Naive thymus-derived CD4-positive, alpha-beta T cell (primary cell): ENCODE measurements at regions of chr10 and their contacts with region 1.

Region 1: DNA sequence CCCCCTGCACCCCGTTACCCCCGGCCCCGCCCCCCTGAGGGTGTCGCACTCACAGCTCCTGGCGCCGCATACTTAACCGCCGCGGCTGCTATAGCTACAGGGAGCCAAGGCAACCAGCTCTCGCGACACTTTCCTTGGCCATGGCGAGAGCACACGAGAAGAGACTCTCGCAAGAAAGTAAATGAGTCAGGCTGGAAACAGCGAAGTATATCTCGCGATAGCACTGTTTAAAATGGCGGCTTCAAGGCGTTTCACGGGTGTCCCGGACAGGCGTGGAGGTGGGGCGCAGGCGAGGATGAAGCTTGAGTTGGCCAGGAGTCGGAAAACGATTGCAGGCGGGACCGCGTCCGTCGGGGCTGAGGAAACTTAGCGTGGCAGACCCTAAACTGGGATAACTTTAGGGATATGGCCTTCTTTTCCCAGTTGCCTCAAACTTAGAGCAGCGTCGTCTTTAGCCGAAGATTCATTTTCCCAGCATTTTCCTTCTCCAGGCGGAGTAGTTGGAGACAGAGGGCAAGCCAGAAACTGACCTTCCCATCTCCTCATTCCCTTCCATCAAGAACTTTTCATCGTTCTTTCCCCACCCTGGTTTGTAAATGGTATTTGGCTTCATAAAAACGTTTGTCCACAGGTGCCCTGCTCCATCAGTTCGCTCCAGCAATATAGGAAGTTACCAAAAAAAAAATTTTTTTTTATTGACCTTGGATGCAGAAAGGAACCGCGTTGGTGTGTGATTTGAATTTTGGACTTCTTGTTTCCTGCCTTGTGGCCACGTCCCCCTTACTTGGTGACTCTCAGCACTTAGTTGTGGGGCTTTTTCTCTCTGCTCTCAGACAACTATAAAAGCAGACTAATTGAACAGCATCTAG is 15.2 kb downstream of the MYOZ1 start:
- DNase-seq: peak; percentile 76 to 97 (median 91)
- ATAC-seq: peak; percentile 97
- H3K4me3 ChIP-seq: peak overlapping the region; percentile 99
- H3K4me3 Mint-ChIP-seq: peak overlapping the region; percentile 91 to 100 (median 96)
- H3K27ac ChIP-seq: peak overlapping the region; percentile 87
- H3K27ac Mint-ChIP-seq: peak overlapping the region; percentile 95 to 100 (median 97)
- H3K4me1 ChIP-seq: peaks cover 7 to 9% of the 10 kb centered on the region in 2 donors
- H3K4me1 Mint-ChIP-seq: peaks cover 0 to 29% (median 24%) of the 10 kb centered on the region in 7 donors
- H3K27me3 ChIP-seq: no peaks in the 10 kb centered on the region
- H3K27me3 Mint-ChIP-seq: no peaks in the 10 kb centered on the region

Region 2: GRCh38 chr10:72625608-72626443 is 1000.3 kb before region 1 on chr10 and contains the start of gene MICU1:
- CTCF ChIA-PET with region 1: no interaction called
- POLR2A ChIA-PET with region 1: no interaction called
- intact Hi-C with region 1: loop called in 1 of 2 experiments (anchors 5 kb)
- DNase-seq: peak; percentile 74 to 93 (median 90)
- ATAC-seq: peak; percentile 100
- H3K4me3 ChIP-seq: peak within 1 kb of the TSS; percentile 97
- H3K4me3 Mint-ChIP-seq: peak within 1 kb of the TSS; percentile 97 to 100 (median 100)
- H3K27ac ChIP-seq: peak within 1 kb of the TSS; percentile 76
- H3K27ac Mint-ChIP-seq: peak within 1 kb of the TSS; percentile 83 to 99 (median 97)
- H3K4me1 ChIP-seq: peaks cover 11 to 16% of the 10 kb centered on the region in 2 donors
- H3K4me1 Mint-ChIP-seq: peaks cover 11 to 28% (median 16%) of the 10 kb centered on the region in 7 donors
- H3K27me3 ChIP-seq: no peaks in the 10 kb centered on the region
- H3K27me3 Mint-ChIP-seq: peaks cover 0 to 8% (median 0%) of the 10 kb centered on the region in 5 donors
- total RNA-seq, gene MICU1: 20.8 to 39.6 (median 26.3) TPM

Region 3: GRCh38 chr10:73246783-73247508 is 379.2 kb before region 1 on chr10 and contains the start of gene DNAJC9:
- CTCF ChIA-PET with region 1: no interaction called
- POLR2A ChIA-PET with region 1: no interaction called
- intact Hi-C with region 1: loop called (anchors 1 to 2 kb)
- DNase-seq: peak; percentile 93 to 98 (median 96)
- ATAC-seq: peak; percentile 95
- H3K4me3 ChIP-seq: peak within 1 kb of the TSS; percentile 71
- H3K4me3 Mint-ChIP-seq: peak within 1 kb of the TSS; percentile 92 to 100 (median 97)
- H3K27ac ChIP-seq: peak within 1 kb of the TSS; percentile 86
- H3K27ac Mint-ChIP-seq: peak within 1 kb of the TSS; percentile 91 to 98 (median 96)
- H3K4me1 ChIP-seq: peaks cover 27 to 37% of the 10 kb centered on the region in 2 donors
- H3K4me1 Mint-ChIP-seq: peaks cover 30 to 69% (median 55%) of the 10 kb centered on the region in 7 donors
- H3K27me3 ChIP-seq: no peaks in the 10 kb centered on the region
- H3K27me3 Mint-ChIP-seq: no peaks in the 10 kb centered on the region
- total RNA-seq, gene DNAJC9: 14.5 to 47.7 (median 26.8) TPM

Region 4: DNA sequence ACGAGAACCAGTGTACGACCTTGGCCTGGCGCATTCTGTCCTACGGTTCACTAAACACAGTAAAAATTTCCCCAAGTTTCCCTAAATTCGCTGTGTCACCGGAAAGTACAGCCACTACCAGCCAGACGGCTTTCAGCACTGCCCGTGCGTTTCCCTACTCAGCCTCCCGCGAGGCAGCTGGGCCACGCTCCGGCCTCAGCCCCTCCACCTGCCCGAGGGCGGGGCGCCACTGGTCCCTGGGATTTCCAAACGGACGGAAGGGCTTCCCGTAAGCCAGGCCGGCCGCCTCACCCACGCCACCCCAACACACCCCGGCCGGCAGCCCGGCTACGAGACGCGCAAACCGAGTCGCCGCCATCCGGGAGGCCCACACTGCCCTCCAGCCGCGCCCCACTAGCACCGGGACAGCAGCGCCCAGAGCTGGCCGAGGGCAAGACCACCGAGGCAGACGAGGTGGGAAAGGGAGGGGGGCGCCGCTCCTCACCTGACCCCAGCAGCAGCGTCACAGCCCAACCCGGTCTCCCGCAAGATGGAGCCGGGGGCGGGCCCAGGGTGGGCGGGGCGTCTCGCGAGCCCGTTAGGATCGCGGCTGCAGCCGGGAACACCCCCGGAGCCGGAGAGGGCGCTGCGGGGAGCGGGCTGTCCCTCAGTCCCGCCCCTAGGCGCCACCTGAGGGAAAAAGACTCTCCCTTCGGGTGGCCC is 212.4 kb before region 1 on chr10 and contains the start of gene ANXA7:
- CTCF ChIA-PET with region 1: no interaction called
- POLR2A ChIA-PET with region 1: interaction called, 3 read pairs
- intact Hi-C with region 1: loop called (anchors 1 kb)
- DNase-seq: peak; percentile 78 to 93 (median 85)
- ATAC-seq: peak; percentile 99
- H3K4me3 ChIP-seq: peak within 1 kb of the TSS; percentile 78
- H3K4me3 Mint-ChIP-seq: peak within 1 kb of the TSS; percentile 82 to 97 (median 94)
- H3K27ac ChIP-seq: peak within 1 kb of the TSS; percentile 98
- H3K27ac Mint-ChIP-seq: peak within 1 kb of the TSS; percentile 83 to 95 (median 90)
- H3K4me1 ChIP-seq: peaks cover 8 to 16% of the 10 kb centered on the region in 2 donors
- H3K4me1 Mint-ChIP-seq: peaks cover 39 to 60% (median 53%) of the 10 kb centered on the region in 7 donors
- H3K27me3 ChIP-seq: no peaks in the 10 kb centered on the region
- H3K27me3 Mint-ChIP-seq: peaks cover 0 to 4% (median 0%) of the 10 kb centered on the region in 5 donors
- total RNA-seq, gene ANXA7: 74.8 to 118 (median 97.3) TPM

Region 5: DNA sequence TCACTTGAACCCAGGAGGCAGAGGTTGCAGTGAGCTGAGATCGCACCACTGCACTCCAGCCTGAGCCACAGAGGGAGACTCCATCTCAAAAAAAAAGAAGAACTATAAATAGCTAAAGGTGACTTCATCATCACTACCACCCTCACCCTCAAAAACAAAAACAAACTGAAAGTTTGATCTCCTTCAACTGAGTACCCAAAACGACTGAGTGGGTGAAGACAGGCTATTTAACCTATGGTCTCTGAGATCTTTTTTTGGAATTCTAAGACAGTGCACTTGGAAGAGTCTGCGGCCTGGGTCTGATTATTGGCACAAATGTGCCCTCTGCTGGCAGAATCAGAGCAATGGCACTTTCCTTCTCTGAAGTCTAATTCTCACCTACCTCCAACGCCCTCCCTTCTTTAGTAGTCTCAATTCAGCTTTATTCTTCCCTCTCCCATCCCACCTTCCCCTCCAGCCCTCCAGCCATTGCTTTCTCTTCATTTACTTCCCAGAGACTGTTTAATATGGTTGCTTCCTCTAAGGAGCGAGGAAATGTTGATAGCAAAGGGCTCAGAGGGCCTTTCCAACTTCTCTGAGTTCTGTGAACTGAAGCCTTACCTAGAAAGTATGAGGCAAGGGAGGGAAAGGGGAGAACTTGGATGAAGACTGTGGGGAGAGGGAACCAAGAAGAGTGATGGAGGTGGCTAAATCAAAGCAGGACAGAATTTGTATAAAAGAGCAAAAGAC is 18.1 kb after region 1 on chr10:
- CTCF ChIA-PET with region 1: interaction called, 5 read pairs
- POLR2A ChIA-PET with region 1: interaction called, 4 read pairs
- intact Hi-C with region 1: loop called (anchors 1 kb)
- DNase-seq: peak in 8 of 9 donors; percentile 33 to 70 (median 60)
- ATAC-seq: peak; percentile 82
- H3K4me3 ChIP-seq: no peak overlapping the region
- H3K4me3 Mint-ChIP-seq: peak overlapping the region in 2 of 10 donors; percentile 34 to 35
- H3K27ac ChIP-seq: no peak overlapping the region
- H3K27ac Mint-ChIP-seq: peak overlapping the region in 5 of 9 donors; percentile 12 to 62 (median 50)
- H3K4me1 ChIP-seq: no peaks in the 10 kb centered on the region
- H3K4me1 Mint-ChIP-seq: peaks cover 0 to 17% (median 6%) of the 10 kb centered on the region in 7 donors
- H3K27me3 ChIP-seq: no peaks in the 10 kb centered on the region
- H3K27me3 Mint-ChIP-seq: peaks cover 0 to 14% (median 11%) of the 10 kb centered on the region in 5 donors

Region 6: GRCh38 chr10:73785221-73785720 is 159.2 kb after region 1 on chr10 and contains the start of gene ZSWIM8:
- CTCF ChIA-PET with region 1: no interaction called
- POLR2A ChIA-PET with region 1: no interaction called
- intact Hi-C with region 1: loop called in 1 of 2 experiments (anchors 5 kb)
- DNase-seq: peak; percentile 70 to 93 (median 86)
- ATAC-seq: peak; percentile 91
- H3K4me3 ChIP-seq: peak within 1 kb of the TSS; percentile 91
- H3K4me3 Mint-ChIP-seq: peak within 1 kb of the TSS; percentile 97 to 100 (median 98)
- H3K27ac ChIP-seq: peak within 1 kb of the TSS; percentile 83
- H3K27ac Mint-ChIP-seq: peak within 1 kb of the TSS; percentile 95 to 99 (median 98)
- H3K4me1 ChIP-seq: peaks cover 36 to 43% of the 10 kb centered on the region in 2 donors
- H3K4me1 Mint-ChIP-seq: peaks cover 27 to 66% (median 53%) of the 10 kb centered on the region in 7 donors
- H3K27me3 ChIP-seq: no peaks in the 10 kb centered on the region
- H3K27me3 Mint-ChIP-seq: no peaks in the 10 kb centered on the region
- total RNA-seq, gene ZSWIM8: 70.9 to 102 (median 83.2) TPM

Region 7: GRCh38 chr10:73803680-73804286 is 177.7 kb after region 1 on chr10:
- CTCF ChIA-PET with region 1: no interaction called
- POLR2A ChIA-PET with region 1: no interaction called
- intact Hi-C with region 1: no loop called
- DNase-seq: no peak
- ATAC-seq: no peak
- H3K4me3 ChIP-seq: no peak overlapping the region
- H3K4me3 Mint-ChIP-seq: peak overlapping the region in 1 of 10 donors; percentile 24
- H3K27ac ChIP-seq: no peak overlapping the region
- H3K27ac Mint-ChIP-seq: peak overlapping the region; percentile 7 to 84 (median 49)
- H3K4me1 ChIP-seq: peaks cover 9 to 18% of the 10 kb centered on the region in 2 donors
- H3K4me1 Mint-ChIP-seq: peaks cover 23 to 46% (median 38%) of the 10 kb centered on the region in 7 donors
- H3K27me3 ChIP-seq: no peaks in the 10 kb centered on the region
- H3K27me3 Mint-ChIP-seq: no peaks in the 10 kb centered on the region

Region 8: DNA sequence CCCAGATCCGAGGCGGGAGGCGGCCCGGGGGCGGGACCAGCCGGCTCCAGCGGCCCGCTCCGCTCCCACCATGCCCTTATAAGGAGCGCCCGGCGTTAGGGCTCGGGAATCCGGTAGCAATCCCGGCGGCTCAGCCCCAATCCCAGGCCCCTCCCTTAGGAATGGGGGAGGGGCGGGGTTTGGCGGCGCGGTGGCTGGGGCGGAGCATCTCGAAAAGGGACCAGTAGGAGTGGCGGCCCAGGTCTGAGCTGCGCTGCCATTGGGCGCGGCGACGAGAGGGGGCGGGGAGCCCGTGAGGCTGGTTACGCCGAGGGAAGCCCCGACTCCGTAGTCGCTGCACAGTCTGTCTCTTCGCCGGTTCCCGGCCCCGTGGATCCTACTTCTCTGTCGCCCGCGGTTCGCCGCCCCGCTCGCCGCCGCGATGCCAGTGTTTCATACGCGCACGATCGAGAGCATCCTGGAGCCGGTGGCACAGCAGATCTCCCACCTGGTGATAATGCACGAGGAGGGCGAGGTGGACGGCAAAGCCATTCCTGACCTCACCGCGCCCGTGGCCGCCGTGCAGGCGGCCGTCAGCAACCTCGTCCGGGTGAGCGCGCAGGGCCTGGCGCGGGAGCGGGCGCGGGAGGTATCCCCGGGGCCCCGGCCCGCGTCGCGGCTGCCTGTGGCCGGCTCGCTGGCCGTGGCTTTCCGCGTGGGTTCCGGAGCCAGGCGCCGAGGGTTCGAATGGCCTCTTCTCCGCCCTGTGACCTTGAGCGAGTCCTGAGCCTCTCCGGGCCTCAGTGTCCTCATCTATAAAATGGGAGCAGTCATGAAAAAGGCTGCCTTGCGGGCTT is 371.9 kb after region 1 on chr10 and contains the start of gene VCL:
- CTCF ChIA-PET with region 1: no interaction called
- POLR2A ChIA-PET with region 1: no interaction called
- intact Hi-C with region 1: loop called in 1 of 2 experiments (anchors 5 kb)
- DNase-seq: peak; percentile 90 to 97 (median 95)
- ATAC-seq: peak; percentile 99
- H3K4me3 ChIP-seq: peak within 1 kb of the TSS; percentile 71
- H3K4me3 Mint-ChIP-seq: peak within 1 kb of the TSS; percentile 83 to 100 (median 97)
- H3K27ac ChIP-seq: peak within 1 kb of the TSS; percentile 91
- H3K27ac Mint-ChIP-seq: peak within 1 kb of the TSS; percentile 83 to 99 (median 98)
- H3K4me1 ChIP-seq: peaks cover 19 to 22% of the 10 kb centered on the region in 2 donors
- H3K4me1 Mint-ChIP-seq: peaks cover 43 to 53% (median 48%) of the 10 kb centered on the region in 7 donors
- H3K27me3 ChIP-seq: no peaks in the 10 kb centered on the region
- H3K27me3 Mint-ChIP-seq: no peaks in the 10 kb centered on the region
- total RNA-seq, gene VCL: 9.0 to 67.7 (median 21.6) TPM

Region 9: GRCh38 chr10:74394416-74394969 is 768.4 kb after region 1 on chr10:
- CTCF ChIA-PET with region 1: no interaction called
- POLR2A ChIA-PET with region 1: no interaction called
- intact Hi-C with region 1: no loop called
- DNase-seq: no peak
- ATAC-seq: no peak
- H3K4me3 ChIP-seq: no peak overlapping the region
- H3K4me3 Mint-ChIP-seq: no peak overlapping the region
- H3K27ac ChIP-seq: no peak overlapping the region
- H3K27ac Mint-ChIP-seq: no peak overlapping the region
- H3K4me1 ChIP-seq: no peaks in the 10 kb centered on the region
- H3K4me1 Mint-ChIP-seq: peaks cover 4 to 22% (median 12%) of the 10 kb centered on the region in 7 donors
- H3K27me3 ChIP-seq: no peaks in the 10 kb centered on the region
- H3K27me3 Mint-ChIP-seq: no peaks in the 10 kb centered on the region